ENCODE measurements at regions of chrX and their contacts with region 1.

Region 1: DNA sequence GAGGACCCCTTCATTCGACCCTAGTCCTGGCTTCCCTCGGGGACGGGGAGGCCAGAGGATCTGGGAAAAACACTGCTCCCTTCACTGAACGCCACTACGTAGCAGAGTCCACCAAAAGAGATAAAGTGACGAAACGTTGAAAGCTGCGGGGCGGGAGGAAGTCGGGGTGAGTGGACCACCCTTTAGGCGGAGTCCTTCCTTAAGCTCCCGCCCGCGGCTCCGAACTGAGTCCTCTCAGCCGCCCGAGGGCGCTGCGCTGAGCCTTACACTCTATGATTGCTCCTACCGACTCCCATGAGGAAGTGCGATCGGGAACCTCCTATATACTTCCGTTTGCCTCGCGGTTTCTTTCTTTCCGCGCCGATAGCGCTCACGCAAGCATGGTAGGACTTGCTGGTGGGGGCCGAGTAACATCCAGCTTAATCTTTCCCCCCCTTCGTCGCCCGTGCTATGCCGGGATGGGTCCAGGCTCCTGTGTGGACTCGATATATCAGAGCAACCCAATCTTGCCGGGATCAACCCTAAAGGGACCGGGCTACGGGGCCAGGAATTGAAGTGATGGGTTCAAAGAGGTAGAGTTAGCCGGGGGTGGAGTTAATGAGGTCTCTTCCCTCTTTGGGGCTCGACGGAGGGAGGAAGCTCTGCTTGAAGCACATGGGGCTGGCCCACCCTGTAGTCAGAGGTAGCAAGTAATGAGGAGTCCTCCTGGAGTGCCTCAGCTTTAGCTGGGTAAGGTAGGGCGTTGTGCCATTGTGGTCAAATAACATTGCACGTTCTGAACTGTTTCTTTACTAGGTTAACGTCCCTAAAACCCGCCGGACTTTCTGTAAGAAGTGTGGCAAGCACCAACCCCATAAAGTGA is at the start of gene RPL36A:
- DNase-seq: peak; percentile 79
- H3K4me3 ChIP-seq: peak within 1 kb of the TSS; percentile 55 to 76 (median 74)
- H3K27ac ChIP-seq: peak within 1 kb of the TSS; percentile 73
- H3K4me1 ChIP-seq: peaks cover 15% of the 10 kb centered on the region
- H3K27me3 ChIP-seq: peaks cover 2% of the 10 kb centered on the region
- CTCF ChIP-seq: peak; percentile 56 to 69
- total RNA-seq, gene RPL36A: 288 to 293 TPM

Region 2: GRCh38 chrX:100864657-100865391 is 526.1 kb before region 1 on chrX:
- CTCF ChIA-PET with region 1: no interaction called
- dilution Hi-C with region 1: no loop called
- in situ Hi-C with region 1: no loop called
- intact Hi-C with region 1: no loop called
- DNase-seq: peak; percentile 49
- H3K4me3 ChIP-seq: no peak overlapping the region
- H3K27ac ChIP-seq: no peak overlapping the region
- H3K4me1 ChIP-seq: no peaks in the 10 kb centered on the region
- H3K27me3 ChIP-seq: no peaks in the 10 kb centered on the region
- CTCF ChIP-seq: no peak

Region 3: GRCh38 chrX:101229170-101229569 is 161.7 kb before region 1 on chrX:
- CTCF ChIA-PET with region 1: no interaction called
- dilution Hi-C with region 1: no loop called
- in situ Hi-C with region 1: no loop called
- intact Hi-C with region 1: no loop called
- DNase-seq: peak; percentile 28
- H3K4me3 ChIP-seq: no peak overlapping the region
- H3K27ac ChIP-seq: no peak overlapping the region
- H3K4me1 ChIP-seq: peaks cover 3% of the 10 kb centered on the region
- H3K27me3 ChIP-seq: peaks cover 3% of the 10 kb centered on the region
- CTCF ChIP-seq: no peak

Region 4: GRCh38 chrX:101348452-101349192 is 42.3 kb before region 1 on chrX and contains the start of gene TIMM8A:
- CTCF ChIA-PET with region 1: no interaction called
- dilution Hi-C with region 1: no loop called
- in situ Hi-C with region 1: loop called in 1 of 2 experiments (anchors 5 kb)
- intact Hi-C with region 1: loop called (anchors 5 kb)
- DNase-seq: peak; percentile 70
- H3K4me3 ChIP-seq: peak within 1 kb of the TSS; percentile 66 to 81 (median 71)
- H3K27ac ChIP-seq: peak within 1 kb of the TSS; percentile 59
- H3K4me1 ChIP-seq: no peaks in the 10 kb centered on the region
- H3K27me3 ChIP-seq: no peaks in the 10 kb centered on the region
- CTCF ChIP-seq: no peak
- total RNA-seq, gene TIMM8A: 7.8 to 19.9 TPM

Region 5: GRCh38 chrX:101407748-101408531 is 17.0 kb after region 1 on chrX and contains the starts of genes GLA and HNRNPH2:
- CTCF ChIA-PET with region 1: no interaction called
- dilution Hi-C with region 1: no loop called
- in situ Hi-C with region 1: no loop called
- intact Hi-C with region 1: loop called (anchors 2 kb)
- DNase-seq: peak; percentile 97
- H3K4me3 ChIP-seq: peak within 1 kb of the TSS; percentile 55 to 71 (median 70)
- H3K27ac ChIP-seq: peak within 1 kb of the TSS; percentile 98
- H3K4me1 ChIP-seq: peaks cover 2% of the 10 kb centered on the region
- H3K27me3 ChIP-seq: no peaks in the 10 kb centered on the region
- CTCF ChIP-seq: no peak
- total RNA-seq, gene GLA: 21.3 to 28.8 TPM
- total RNA-seq, gene HNRNPH2: 49.1 to 51.2 TPM

Measured in mammary epithelial cell (primary cell).